H1 (cell line): ENCODE measurements at regions of chr10 and their contacts with region 1.

Region 1: GRCh38 chr10:102583435-102584417 is 60.6 kb upstream of the TRIM8 start:
- DNase-seq: peak; percentile 59 to 89
- H3K4me3 ChIP-seq: no peak overlapping the region
- H3K27ac ChIP-seq: no peak overlapping the region
- H3K4me1 ChIP-seq: peaks cover 0 to 7% (median 5%) of the 10 kb centered on the region in 4 experiments; a peak in 4 of 7 replicates
- H3K27me3 ChIP-seq: no peaks in the 10 kb centered on the region
- CTCF ChIP-seq: peak; percentile 88 to 93 (median 90)
- EP300 ChIP-seq: no peak
- POLR2A ChIP-seq: no peak
- RAD21 ChIP-seq: peak; percentile 93 to 95

Region 2: GRCh38 chr10:102358712-102359382 is 224.9 kb before region 1 on chr10:
- CTCF ChIA-PET with region 1: no interaction called
- POLR2A ChIA-PET with region 1: no interaction called
- DNase-seq: no peak
- H3K4me3 ChIP-seq: no peak overlapping the region
- H3K27ac ChIP-seq: no peak overlapping the region
- H3K4me1 ChIP-seq: no peaks in the 10 kb centered on the region
- H3K27me3 ChIP-seq: no peaks in the 10 kb centered on the region
- CTCF ChIP-seq: no peak
- EP300 ChIP-seq: no peak
- POLR2A ChIP-seq: no peak
- RAD21 ChIP-seq: no peak

Region 3: GRCh38 chr10:102485093-102485784 is 98.5 kb before region 1 on chr10:
- CTCF ChIA-PET with region 1: interaction called, 66 read pairs
- POLR2A ChIA-PET with region 1: interaction called, 3 read pairs
- DNase-seq: no peak
- H3K4me3 ChIP-seq: no peak overlapping the region
- H3K27ac ChIP-seq: no peak overlapping the region
- H3K4me1 ChIP-seq: no peaks in the 10 kb centered on the region
- H3K27me3 ChIP-seq: no peaks in the 10 kb centered on the region
- CTCF ChIP-seq: no peak
- EP300 ChIP-seq: no peak
- POLR2A ChIP-seq: no peak
- RAD21 ChIP-seq: no peak

Region 4: DNA sequence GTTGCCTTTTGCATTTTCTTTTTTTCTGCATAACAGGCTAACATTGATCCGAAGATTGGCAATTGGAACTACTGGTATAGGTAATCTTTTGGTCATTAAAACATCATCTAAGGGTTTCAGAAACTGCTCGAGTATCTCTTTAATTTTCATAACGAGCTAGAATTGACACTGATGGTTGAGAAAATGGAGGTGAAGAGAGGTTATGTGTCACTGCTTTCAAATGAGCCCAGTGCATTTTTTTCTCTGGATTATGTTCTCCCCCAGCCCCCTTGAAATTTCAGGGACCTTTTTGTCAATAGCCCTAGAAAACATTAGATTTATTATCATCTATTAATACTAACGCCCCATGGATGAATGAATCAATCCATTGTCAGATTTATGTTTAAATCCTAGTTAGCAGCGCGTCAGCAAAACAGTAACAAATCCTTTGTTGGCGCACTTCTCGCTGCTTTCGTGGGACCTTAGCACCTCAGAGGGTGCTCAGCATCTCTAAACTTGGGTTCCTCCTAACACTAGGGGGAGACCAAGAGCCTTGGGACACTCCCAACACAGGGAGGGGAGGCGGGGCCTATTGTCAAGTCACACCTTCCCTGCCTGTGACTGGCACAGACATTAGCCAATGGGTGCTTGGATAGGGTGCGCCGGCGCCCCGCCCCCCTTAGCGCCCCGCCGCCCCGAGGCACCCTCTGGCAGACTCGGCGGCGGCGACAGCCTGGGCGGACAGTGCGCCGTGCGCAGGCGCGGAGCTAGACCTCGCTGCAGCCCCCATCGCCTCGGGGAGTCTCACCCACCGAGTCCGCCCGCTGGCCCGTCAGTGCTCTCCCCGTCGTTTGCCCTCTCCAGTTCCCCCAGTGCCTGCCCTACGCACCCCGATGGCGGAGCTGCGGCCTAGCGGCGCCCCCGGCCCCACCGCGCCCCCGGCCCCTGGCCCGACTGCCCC is 80.2 kb before region 1 on chr10 and contains the start of gene SUFU:
- CTCF ChIA-PET with region 1: interaction called, 182 read pairs
- POLR2A ChIA-PET with region 1: interaction called, 5 read pairs
- DNase-seq: peak; percentile 98 to 99
- H3K4me3 ChIP-seq: peak within 1 kb of the TSS; percentile 90 to 100 (median 98)
- H3K27ac ChIP-seq: no peak within 1 kb of the TSS
- H3K4me1 ChIP-seq: peaks cover 0 to 10% (median 3%) of the 10 kb centered on the region in 4 experiments; a peak in 4 of 7 replicates
- H3K27me3 ChIP-seq: peaks cover 2 to 11% (median 8%) of the 10 kb centered on the region in 4 experiments; a peak in 4 of 7 replicates
- CTCF ChIP-seq: peak; percentile 78 to 93 (median 80)
- EP300 ChIP-seq: no peak
- POLR2A ChIP-seq: peak in 1 of 2 experiments; percentile 58; a peak in 2 of 3 replicates
- RAD21 ChIP-seq: peak; percentile 74 to 80
- total RNA-seq, gene SUFU: 9.4 and 10.8 TPM in 2 replicates

Region 5: DNA sequence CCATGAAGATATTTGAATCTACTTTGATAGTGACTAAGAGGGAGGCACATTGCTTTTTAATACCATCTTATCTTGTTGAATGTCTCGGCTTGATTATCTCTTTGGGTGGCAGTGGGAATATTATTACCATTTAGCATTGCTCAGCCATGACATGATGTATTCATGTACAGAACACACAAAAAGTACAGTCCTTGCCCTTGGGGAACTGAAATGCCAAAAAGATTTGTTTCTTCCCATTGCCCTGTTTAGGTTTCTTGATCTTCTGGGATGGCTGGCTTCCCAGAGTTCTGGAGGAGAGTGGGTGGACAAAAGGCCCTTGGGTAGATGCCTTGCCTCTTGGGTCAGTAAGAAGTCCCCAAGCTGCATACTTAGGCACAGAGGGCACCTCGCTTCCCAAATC is 56.2 kb before region 1 on chr10:
- CTCF ChIA-PET with region 1: interaction called, 12 read pairs
- POLR2A ChIA-PET with region 1: no interaction called
- DNase-seq: no peak
- H3K4me3 ChIP-seq: no peak overlapping the region
- H3K27ac ChIP-seq: no peak overlapping the region
- H3K4me1 ChIP-seq: no peaks in the 10 kb centered on the region
- H3K27me3 ChIP-seq: no peaks in the 10 kb centered on the region
- CTCF ChIP-seq: no peak
- EP300 ChIP-seq: no peak
- POLR2A ChIP-seq: no peak
- RAD21 ChIP-seq: no peak

Region 6: DNA sequence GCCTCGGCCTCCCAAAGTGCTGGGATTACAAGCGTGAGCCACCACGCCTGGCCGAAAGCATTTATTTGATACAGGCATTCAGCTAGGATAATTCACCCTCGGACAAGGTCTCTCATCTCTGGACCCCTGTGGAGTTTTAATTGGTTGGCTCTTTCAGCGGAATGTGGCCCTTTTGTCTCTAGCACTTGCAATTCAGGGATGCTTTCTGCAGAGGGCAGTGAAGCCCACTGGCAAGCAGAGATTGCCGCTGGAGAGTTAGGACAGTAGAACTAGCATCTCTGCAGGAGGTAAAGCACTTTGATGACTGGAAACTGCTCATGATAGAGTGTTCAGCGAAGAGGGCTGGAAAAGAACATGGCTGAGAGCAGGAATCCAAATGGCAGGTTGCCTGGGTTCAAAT is 17.9 kb before region 1 on chr10:
- CTCF ChIA-PET with region 1: interaction called, 46 read pairs
- POLR2A ChIA-PET with region 1: interaction called, 3 read pairs
- DNase-seq: peak; percentile 77 to 78
- H3K4me3 ChIP-seq: no peak overlapping the region
- H3K27ac ChIP-seq: no peak overlapping the region
- H3K4me1 ChIP-seq: 0 out of 7 replicates have a peak, but pooled peaks cover 0 to 3% (median 0%) of the 10 kb centered on the region in 4 experiments
- H3K27me3 ChIP-seq: peaks cover 10 to 49% (median 37%) of the 10 kb centered on the region in 4 experiments
- CTCF ChIP-seq: peak; percentile 56 to 88 (median 63)
- EP300 ChIP-seq: 0 out of 3 replicates have a peak, but pooled peaks of 1 of the 2 experiments have one; percentile 50
- POLR2A ChIP-seq: no peak
- RAD21 ChIP-seq: peak; percentile 58 to 69

Region 7: GRCh38 chr10:102596506-102596971 is 12.8 kb after region 1 on chr10:
- CTCF ChIA-PET with region 1: interaction called, 62 read pairs
- POLR2A ChIA-PET with region 1: no interaction called
- DNase-seq: peak in 1 of 2 experiments; percentile 65
- H3K4me3 ChIP-seq: no peak overlapping the region
- H3K27ac ChIP-seq: no peak overlapping the region
- H3K4me1 ChIP-seq: peaks cover 0 to 2% (median 0%) of the 10 kb centered on the region in 4 experiments; a peak in 3 of 7 replicates
- H3K27me3 ChIP-seq: no peaks in the 10 kb centered on the region; a peak in 1 of 7 replicates
- CTCF ChIP-seq: peak; percentile 81 to 97 (median 87)
- EP300 ChIP-seq: no peak
- POLR2A ChIP-seq: no peak
- RAD21 ChIP-seq: peak; percentile 77 to 85